ENCODE measurements at regions of chr1 and their contacts with region 1.

Region 1: GRCh38 chr1:118223426-118223825 is 38.4 kb upstream of the SPAG17 start:
- DNase-seq: peak; percentile 10 to 55
- ATAC-seq: peak; percentile 94 to 99
- H3K4me3 ChIP-seq: no peak overlapping the region
- H3K27ac ChIP-seq: no peak overlapping the region
- H3K4me1 ChIP-seq: peaks cover 0 to 9% of the 10 kb centered on the region in 2 donors
- H3K27me3 ChIP-seq: no peaks in the 10 kb centered on the region
- CTCF ChIP-seq: peak; percentile 50 to 70 (median 63)
- POLR2A ChIP-seq: no peak

Region 2: DNA sequence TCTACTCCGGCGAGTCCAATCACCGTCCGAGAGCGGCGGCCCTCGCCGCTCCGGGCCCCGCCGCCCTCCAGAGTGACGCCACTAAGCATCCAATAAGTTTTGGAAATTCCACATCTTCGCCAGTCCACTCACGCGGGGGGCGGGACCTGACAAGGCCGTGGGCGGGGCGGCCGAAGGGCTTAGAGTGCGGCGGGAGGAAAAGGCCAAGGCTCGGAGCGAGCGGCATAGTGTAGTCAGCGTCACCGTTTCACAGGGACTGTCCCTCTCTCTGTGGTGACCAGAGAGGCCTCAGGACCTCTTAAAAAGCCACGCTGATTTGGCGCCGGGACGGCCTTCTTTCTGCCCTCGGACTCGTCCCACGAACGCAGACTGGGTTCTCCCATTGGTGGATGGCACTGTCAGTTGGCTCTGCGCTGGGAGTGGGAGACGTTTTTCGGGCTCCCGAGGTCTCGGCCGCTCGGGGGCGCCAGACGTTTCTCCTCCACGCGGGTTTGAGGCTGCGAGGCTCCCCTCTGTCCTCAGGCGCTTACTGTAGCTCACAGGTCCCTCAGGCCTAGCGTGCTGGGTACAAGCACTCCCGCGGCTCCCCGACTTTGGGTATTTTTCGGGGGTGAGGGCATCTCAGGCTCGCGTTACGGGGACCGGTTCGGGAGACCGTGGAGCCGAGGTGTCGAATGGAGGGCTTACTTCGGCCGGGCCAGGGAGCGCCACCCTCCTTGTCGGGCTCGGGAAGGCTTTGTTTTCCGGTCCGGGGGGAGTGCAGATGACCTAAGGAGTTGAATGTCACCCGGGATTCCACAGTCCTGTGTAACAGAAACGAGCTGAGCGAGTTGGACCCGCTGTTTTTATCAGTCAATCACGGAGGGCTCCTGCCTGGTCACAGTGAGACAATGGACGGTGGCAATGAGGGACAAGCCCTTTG is 1101.4 kb before region 1 on chr1:
- in situ Hi-C with region 1: no loop called
- intact Hi-C with region 1: no loop called
- DNase-seq: peak; percentile 93 to 97
- ATAC-seq: peak; percentile 84 to 90
- H3K4me3 ChIP-seq: peak overlapping the region; percentile 60 to 85 (median 80)
- H3K27ac ChIP-seq: peak overlapping the region; percentile 87 to 97 (median 92)
- H3K4me1 ChIP-seq: peaks cover 54 to 61% of the 10 kb centered on the region in 2 donors
- H3K27me3 ChIP-seq: no peaks in the 10 kb centered on the region
- CTCF ChIP-seq: peak; percentile 59 to 82 (median 66)
- POLR2A ChIP-seq: peak; percentile 62 to 66

Region 3: GRCh38 chr1:118247593-118247992 is 24.2 kb after region 1 on chr1:
- in situ Hi-C with region 1: no loop called
- intact Hi-C with region 1: loop called (anchors 1 kb)
- DNase-seq: peak in 1 of 2 donors; percentile 19
- ATAC-seq: peak; percentile 38 to 69
- H3K4me3 ChIP-seq: no peak overlapping the region
- H3K27ac ChIP-seq: peak overlapping the region in 2 of 4 donors; percentile 16 to 26
- H3K4me1 ChIP-seq: peaks cover 8 to 11% of the 10 kb centered on the region in 2 donors
- H3K27me3 ChIP-seq: no peaks in the 10 kb centered on the region
- CTCF ChIP-seq: peak in 2 of 5 experiments; percentile 13 to 28
- POLR2A ChIP-seq: no peak

Region 4: GRCh38 chr1:118716782-118717181 is 493.4 kb after region 1 on chr1:
- in situ Hi-C with region 1: no loop called
- intact Hi-C with region 1: loop called (anchors 2 kb)
- DNase-seq: no peak
- ATAC-seq: no peak
- H3K4me3 ChIP-seq: no peak overlapping the region
- H3K27ac ChIP-seq: no peak overlapping the region
- H3K4me1 ChIP-seq: peaks cover 9 to 12% of the 10 kb centered on the region in 2 donors
- H3K27me3 ChIP-seq: no peaks in the 10 kb centered on the region
- CTCF ChIP-seq: peak in 2 of 5 experiments; percentile 35 to 42
- POLR2A ChIP-seq: no peak

Region 5: GRCh38 chr1:118815909-118816308 is 592.5 kb after region 1 on chr1:
- in situ Hi-C with region 1: no loop called
- intact Hi-C with region 1: no loop called
- DNase-seq: no peak
- ATAC-seq: no peak
- H3K4me3 ChIP-seq: no peak overlapping the region
- H3K27ac ChIP-seq: no peak overlapping the region
- H3K4me1 ChIP-seq: no peaks in the 10 kb centered on the region
- H3K27me3 ChIP-seq: no peaks in the 10 kb centered on the region
- CTCF ChIP-seq: no peak
- POLR2A ChIP-seq: no peak